Activated CD4-positive, alpha-beta memory T cell treated with anti-CD3 and anti-CD28 coated beads, Interleukin-2, amount 10 ng/mL, durations not matched to agents 7 days and 5 days (primary cell): ENCODE measurements at regions of chr2 and their contacts with region 1.

Region 1: DNA sequence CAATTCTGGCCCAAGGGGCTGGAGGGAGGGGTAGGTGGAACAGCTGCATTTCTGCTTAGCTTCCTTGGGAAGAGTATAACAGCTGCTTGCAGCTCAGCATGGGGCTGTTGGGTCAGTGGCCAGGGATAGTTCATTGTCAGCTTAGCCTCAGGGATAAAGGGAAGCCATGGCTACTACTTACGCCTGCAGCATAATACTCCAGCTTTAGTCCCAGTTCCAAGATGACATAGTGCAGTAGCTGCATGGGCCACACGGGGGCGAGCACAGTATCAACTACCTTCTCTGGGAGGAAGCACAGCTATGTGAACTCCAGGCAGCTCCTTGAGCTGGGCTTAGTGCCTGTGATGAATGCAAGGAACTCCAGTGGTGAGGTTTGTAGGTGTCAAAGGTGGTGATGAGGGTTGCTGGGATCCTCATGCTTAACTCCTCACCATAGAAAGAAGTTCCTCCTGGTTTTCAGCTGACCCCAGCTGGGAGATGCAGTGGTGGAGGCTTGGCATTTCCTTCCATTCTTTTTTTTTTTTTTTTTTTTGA is 35.4 kb upstream of the RHOB start:
- DNase-seq: peak; percentile 78
- H3K4me3 Mint-ChIP-seq: no peak overlapping the region
- H3K27ac Mint-ChIP-seq: no peak overlapping the region
- H3K4me1 Mint-ChIP-seq: peaks cover 2% of the 10 kb centered on the region
- H3K27me3 Mint-ChIP-seq: peaks cover 53% of the 10 kb centered on the region

Region 2: DNA sequence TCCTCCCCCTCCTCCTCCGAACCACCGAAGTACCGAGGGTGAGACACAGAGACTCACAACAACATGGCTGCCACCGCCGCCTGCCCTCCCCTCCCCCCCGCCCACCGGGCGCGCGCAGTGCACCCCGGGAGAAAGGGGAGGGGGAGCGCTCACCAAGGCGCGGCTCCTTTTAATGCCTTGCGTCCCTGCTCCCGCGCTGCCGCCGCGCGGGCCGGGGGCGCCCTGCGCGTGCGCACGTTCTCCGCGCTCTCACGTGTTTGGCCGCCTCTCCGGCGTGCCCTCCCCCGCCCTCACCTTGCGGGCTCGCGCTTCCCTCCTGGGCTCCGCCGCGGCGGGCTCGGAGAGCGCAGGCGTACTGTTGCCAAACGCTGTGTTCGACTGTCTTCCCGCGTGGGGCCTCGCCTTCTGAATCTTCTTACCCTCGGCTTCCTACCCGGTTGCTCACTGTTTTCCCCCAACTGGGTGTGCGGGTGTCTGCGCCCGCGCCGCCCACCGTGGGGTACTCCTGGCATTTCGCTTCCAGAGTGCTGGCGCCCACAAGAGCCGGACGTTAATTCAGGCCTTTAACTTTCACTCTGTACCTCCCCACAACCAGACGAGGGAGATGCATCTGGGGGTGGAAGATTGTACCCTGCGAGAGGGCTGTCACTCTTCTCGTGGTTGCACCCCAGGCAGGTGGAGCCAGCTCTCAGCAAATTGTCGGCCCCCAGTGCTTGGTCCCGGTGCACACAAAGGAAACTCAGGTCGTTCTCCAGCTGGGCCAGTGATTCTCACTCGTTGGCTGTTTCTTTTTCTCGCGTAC is 60.5 kb before region 1 on chr2 and contains the start of gene PUM2:
- CTCF ChIA-PET with region 1: interaction called, 14 read pairs
- POLR2A ChIA-PET with region 1: interaction called, 7 read pairs
- DNase-seq: peak; percentile 97
- H3K4me3 Mint-ChIP-seq: no peak within 1 kb of the TSS
- H3K27ac Mint-ChIP-seq: peak within 1 kb of the TSS; percentile 80
- H3K4me1 Mint-ChIP-seq: peaks cover 38% of the 10 kb centered on the region
- H3K27me3 Mint-ChIP-seq: no peaks in the 10 kb centered on the region
- total RNA-seq, gene PUM2: 141 to 147 TPM

Region 3: DNA sequence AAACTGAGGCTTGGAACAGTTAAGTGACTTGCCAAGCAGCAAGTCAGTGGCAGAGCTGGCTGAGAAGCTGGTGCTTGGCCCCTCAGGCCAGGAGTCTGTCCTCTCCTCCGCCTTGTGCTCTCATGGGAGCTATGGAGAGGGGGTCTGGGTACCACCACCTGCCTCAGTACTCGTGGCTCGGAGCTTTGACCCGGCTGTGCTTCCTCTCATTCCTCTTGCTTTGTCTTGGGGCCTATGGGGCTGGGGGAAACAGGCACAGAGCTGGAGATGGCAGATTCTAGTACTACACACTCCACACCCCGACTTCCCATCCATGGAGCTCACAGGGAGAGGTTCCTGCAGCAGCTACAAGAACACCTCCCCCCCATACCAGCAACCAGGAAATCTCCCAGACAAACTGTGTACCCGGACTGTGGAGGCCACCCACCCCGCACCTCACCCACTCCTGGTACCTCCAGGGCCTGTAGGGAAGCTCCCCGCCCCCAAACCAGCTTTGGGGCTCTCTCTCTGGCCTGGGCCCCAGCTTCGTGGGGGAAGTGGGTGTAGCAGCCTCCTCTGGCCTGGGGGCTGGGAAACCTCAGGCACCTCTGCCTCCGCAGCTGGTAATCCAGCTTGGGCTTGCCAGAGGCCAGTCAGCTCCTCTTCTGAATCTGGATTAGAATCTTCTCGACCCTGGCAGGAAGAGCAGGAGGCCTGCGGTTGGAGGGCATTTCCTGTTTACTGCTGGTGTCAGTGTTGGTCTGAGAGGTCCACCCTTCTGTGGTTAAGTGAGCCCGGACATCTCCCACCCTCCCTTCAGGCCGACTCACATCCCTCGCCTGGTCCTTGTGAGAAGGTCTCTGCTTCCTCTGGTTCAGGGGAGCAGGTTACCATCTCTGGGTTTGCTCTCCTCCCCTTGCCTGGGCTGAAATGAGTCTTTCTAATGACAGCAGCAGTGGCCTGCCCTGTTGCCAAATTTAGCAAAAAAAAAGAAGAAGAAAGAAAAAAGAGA is 13.2 kb after region 1 on chr2:
- CTCF ChIA-PET with region 1: interaction called, 106 read pairs
- POLR2A ChIA-PET with region 1: interaction called, 7 read pairs
- DNase-seq: peak; percentile 58
- H3K4me3 Mint-ChIP-seq: peak overlapping the region; percentile 3
- H3K27ac Mint-ChIP-seq: peak overlapping the region; percentile 68
- H3K4me1 Mint-ChIP-seq: peaks cover 44% of the 10 kb centered on the region
- H3K27me3 Mint-ChIP-seq: peaks cover 4% of the 10 kb centered on the region

Region 4: DNA sequence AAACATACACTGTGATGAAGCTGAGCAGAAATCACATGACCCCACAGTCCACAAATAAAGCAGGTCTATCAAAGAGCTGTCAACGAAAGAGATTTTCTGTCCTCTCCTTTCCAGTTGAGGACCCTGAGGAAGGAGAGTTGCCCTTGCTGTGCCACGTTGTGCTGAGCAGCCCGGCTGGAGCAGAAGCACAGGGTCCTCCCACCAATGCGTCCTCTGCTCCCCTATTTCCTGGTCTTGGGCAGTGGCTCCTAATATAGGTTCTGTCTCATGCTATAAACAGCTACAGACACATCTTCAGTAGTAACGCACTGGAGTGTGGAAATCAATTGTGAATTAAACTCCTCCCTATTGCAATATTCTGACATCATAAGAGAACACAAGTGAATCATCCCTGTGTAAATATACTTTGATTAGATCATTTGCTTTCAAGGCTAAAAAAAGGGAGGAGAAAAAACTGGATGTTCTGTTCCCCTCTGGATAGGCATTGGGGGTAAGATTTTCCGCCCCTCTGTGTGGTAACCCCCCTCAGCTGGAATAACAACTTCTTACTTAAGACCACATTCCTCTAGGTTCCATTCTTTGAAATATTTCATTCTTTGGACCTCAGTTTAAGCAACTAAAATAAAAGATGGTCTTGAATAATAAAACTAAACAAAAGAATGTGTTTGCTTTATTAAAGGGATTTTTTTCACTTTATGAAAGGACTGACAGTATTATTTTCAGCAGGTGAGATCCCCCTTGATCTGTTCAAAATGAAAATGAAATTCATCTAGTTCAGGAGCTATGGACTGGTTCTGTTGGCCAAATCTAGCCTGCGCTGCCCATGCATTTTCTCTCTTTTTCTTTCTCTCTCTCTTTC is 27.1 kb after region 1 on chr2:
- CTCF ChIA-PET with region 1: interaction called, 35 read pairs
- POLR2A ChIA-PET with region 1: no interaction called
- DNase-seq: no peak
- H3K4me3 Mint-ChIP-seq: no peak overlapping the region
- H3K27ac Mint-ChIP-seq: no peak overlapping the region
- H3K4me1 Mint-ChIP-seq: peaks cover 3% of the 10 kb centered on the region
- H3K27me3 Mint-ChIP-seq: peaks cover 36% of the 10 kb centered on the region

Region 5: GRCh38 chr2:20466417-20466911 is 55.0 kb after region 1 on chr2:
- CTCF ChIA-PET with region 1: no interaction called
- POLR2A ChIA-PET with region 1: no interaction called
- DNase-seq: no peak
- H3K4me3 Mint-ChIP-seq: no peak overlapping the region
- H3K27ac Mint-ChIP-seq: no peak overlapping the region
- H3K4me1 Mint-ChIP-seq: no peaks in the 10 kb centered on the region
- H3K27me3 Mint-ChIP-seq: peaks cover 20% of the 10 kb centered on the region

Region 6: DNA sequence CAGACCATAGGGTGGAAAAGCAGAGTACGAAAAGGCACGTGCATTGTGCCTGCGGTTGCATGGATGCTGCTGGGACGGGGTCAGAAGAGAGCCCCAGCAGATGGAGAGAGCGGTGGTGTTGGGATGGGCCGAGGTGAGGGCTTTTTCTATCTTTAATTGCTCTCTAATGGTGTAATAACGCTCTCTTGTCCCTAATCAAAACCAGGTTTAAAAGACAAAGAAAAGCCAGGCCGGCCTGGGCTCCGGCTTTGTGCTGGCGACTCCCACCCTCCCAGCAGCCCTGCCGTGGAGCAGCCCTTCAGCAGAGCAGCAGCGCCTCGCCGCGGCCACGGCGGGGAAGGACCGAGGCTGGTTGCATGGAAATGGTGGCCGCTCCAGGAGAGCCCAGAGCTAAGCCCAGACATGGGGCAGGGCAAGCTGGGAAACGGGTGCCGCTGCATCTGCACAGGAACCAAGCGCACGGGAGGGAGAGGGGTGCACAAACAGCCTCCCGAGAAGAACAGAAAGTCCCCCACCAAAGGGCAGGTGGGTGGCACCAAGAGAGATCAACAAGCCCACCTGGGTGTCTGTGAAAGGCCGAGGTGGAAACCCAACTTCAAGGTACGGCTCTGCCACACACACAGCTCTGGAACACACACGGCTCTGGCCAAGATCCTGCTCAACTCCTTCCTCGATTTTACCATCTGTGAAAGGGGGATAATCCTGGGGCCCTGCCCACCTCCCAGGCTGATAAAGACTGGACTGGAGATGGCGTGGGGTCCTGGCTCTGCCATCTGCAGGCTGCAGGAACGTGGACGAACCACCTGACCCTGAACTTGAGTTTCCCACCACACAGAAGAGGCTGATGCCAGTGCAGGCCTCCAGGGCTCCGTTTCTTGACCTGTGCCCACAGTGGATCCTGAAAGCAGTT is 224.5 kb after region 1 on chr2:
- CTCF ChIA-PET with region 1: interaction called, 79 read pairs
- POLR2A ChIA-PET with region 1: no interaction called
- DNase-seq: peak; percentile 53
- H3K4me3 Mint-ChIP-seq: no peak overlapping the region
- H3K27ac Mint-ChIP-seq: no peak overlapping the region
- H3K4me1 Mint-ChIP-seq: peaks cover 5% of the 10 kb centered on the region
- H3K27me3 Mint-ChIP-seq: no peaks in the 10 kb centered on the region

Region 7: DNA sequence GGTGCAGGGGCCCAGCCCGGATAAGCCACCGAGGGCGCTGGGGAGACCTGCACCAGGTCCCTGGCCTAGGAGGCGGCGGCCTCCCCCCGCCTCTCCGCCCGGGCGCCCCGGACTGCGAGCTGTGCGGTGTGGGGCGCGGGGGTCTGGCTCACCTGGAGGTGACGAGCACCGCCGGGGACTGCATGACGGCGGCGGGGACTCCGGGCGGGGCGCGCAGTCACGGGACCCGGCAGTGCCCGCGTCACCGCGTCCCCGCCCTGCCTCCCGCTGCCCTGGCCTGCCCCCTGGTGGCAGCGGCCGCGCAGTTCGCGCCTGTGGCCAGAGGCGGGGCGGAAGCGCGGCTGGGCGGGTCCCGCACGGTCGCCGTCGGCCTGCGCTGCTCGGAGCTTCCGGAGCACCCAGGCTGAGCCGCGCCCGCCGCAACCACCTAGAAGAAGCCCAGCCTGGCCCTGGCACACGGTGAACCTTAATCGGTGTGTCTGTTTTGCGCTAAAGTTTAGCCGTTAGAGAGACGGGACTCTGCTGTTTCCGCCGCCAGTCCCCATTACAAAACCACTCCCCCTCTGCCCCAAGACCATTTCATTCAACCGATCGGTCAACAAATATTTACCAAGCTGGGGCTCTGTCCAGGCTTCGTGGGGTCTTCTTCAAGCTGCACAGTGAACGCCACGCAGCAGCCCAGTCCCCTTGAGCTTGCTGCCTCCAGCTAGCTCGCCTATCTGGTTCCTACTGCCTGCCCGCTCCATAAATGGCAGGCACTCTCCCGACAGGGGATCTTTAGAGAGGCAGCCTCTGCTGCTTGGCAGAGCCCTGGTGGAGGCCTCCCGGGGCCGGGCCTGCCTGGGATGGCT is 239.7 kb after region 1 on chr2 and contains the start of gene HS1BP3:
- CTCF ChIA-PET with region 1: interaction called, 43 read pairs
- POLR2A ChIA-PET with region 1: interaction called, 3 read pairs
- DNase-seq: peak; percentile 92
- H3K4me3 Mint-ChIP-seq: peak within 1 kb of the TSS; percentile 91
- H3K27ac Mint-ChIP-seq: peak within 1 kb of the TSS; percentile 89
- H3K4me1 Mint-ChIP-seq: peaks cover 30% of the 10 kb centered on the region
- H3K27me3 Mint-ChIP-seq: peaks cover 12% of the 10 kb centered on the region
- total RNA-seq, gene HS1BP3: 17.2 to 19.4 TPM

Region 8: GRCh38 chr2:20916604-20917286 is 505.3 kb after region 1 on chr2:
- CTCF ChIA-PET with region 1: no interaction called
- POLR2A ChIA-PET with region 1: no interaction called
- DNase-seq: no peak
- H3K4me3 Mint-ChIP-seq: no peak overlapping the region
- H3K27ac Mint-ChIP-seq: no peak overlapping the region
- H3K4me1 Mint-ChIP-seq: peaks cover 16% of the 10 kb centered on the region
- H3K27me3 Mint-ChIP-seq: peaks cover 8% of the 10 kb centered on the region